Naive thymus-derived CD8-positive, alpha-beta T cell (primary cell): ENCODE measurements at regions of chr5 and their contacts with region 1.

Region 1: GRCh38 chr5:109921735-109922380 is 232.1 kb downstream of the MAN2A1 start:
- DNase-seq: peak; percentile 29 to 90 (median 72)
- ATAC-seq: peak; percentile 89 to 91
- H3K4me3 Mint-ChIP-seq: peak overlapping the region; percentile 71 to 91 (median 84)
- H3K27ac Mint-ChIP-seq: peak overlapping the region; percentile 93 to 100 (median 97)
- H3K4me1 Mint-ChIP-seq: peaks cover 35 to 72% (median 51%) of the 10 kb centered on the region in 4 donors
- H3K27me3 Mint-ChIP-seq: no peaks in the 10 kb centered on the region

Region 2: DNA sequence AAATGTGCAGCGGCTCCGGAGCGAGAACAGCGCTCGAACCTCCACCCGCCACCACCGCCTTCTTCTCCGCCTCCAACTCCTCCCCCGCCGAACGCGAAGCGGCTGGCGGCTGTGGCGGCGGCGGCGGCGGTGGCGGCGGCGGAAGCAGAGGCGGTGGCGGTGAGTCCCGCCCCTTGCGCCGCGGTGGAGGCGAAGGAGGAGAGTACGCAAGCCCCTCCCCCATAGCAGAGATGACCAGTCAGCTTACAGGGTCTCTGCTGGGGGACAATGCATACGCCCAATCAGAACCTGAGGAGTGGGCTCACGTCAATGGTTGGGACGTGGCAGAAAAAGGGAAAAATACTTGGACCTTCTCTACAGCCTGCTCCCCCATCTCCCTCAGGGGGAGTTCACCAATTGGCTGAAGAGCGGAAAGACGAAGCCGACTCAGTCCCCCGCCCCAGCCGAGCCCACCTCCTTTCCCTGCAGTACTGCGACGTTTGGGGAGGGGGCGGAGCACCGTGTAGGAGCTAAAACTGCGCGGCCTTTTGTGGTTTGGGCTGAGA is 511.9 kb before region 1 on chr5 and contains the start of gene PJA2:
- POLR2A ChIA-PET with region 1: interaction called, 16 read pairs
- DNase-seq: peak; percentile 90 to 98 (median 96)
- ATAC-seq: peak; percentile 75 to 77
- H3K4me3 Mint-ChIP-seq: peak within 1 kb of the TSS; percentile 95 to 100 (median 99)
- H3K27ac Mint-ChIP-seq: peak within 1 kb of the TSS; percentile 97 to 100 (median 100)
- H3K4me1 Mint-ChIP-seq: peaks cover 18 to 43% (median 36%) of the 10 kb centered on the region in 4 donors
- H3K27me3 Mint-ChIP-seq: peaks cover 0 to 3% (median 0%) of the 10 kb centered on the region in 5 donors
- polyA plus RNA-seq, gene PJA2: 46.0 to 54.4 (median 47.7) TPM

Region 3: DNA sequence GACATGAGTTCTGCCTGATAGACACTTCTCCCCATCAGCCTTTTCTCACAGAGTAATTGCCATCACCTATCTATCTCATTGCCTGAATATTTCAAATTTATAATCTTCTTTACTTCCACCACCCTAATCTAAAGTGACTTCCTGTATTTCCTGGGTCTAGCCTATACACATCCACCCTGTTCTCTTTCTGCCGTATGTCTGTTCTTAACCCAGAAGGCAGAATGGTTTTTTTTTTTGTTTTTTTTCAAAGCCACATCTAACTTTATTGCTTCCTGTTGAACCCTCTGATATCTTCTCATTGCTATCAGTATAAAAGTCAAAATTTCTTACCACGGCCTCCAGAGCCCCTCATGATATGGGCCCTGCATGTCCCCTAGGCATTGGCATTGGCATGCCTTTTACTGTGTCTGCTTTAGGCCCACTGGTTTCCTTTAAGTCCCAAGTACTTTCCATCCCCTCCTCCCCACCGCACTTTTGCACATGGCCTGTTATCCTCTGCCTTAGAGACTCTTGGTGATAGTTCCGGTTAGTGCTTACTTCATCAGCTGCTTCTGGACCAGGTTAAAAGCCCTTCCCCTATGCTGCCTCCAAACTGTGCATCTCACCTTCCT is 72.3 kb before region 1 on chr5:
- POLR2A ChIA-PET with region 1: interaction called, 11 read pairs
- DNase-seq: peak in 5 of 10 donors; percentile 6 to 63 (median 30)
- ATAC-seq: peak; percentile 82 to 86
- H3K4me3 Mint-ChIP-seq: peak overlapping the region; percentile 39 to 81 (median 58)
- H3K27ac Mint-ChIP-seq: peak overlapping the region; percentile 82 to 95 (median 88)
- H3K4me1 Mint-ChIP-seq: peaks cover 32 to 72% (median 66%) of the 10 kb centered on the region in 4 donors
- H3K27me3 Mint-ChIP-seq: no peaks in the 10 kb centered on the region

Region 4: GRCh38 chr5:109857405-109858031 is 64.3 kb before region 1 on chr5:
- POLR2A ChIA-PET with region 1: interaction called, 32 read pairs
- DNase-seq: peak in 6 of 10 donors; percentile 8 to 75 (median 44)
- ATAC-seq: peak; percentile 74 to 85
- H3K4me3 Mint-ChIP-seq: peak overlapping the region; percentile 37 to 86 (median 70)
- H3K27ac Mint-ChIP-seq: peak overlapping the region; percentile 84 to 96 (median 93)
- H3K4me1 Mint-ChIP-seq: peaks cover 32 to 83% (median 78%) of the 10 kb centered on the region in 4 donors
- H3K27me3 Mint-ChIP-seq: no peaks in the 10 kb centered on the region

Region 5: GRCh38 chr5:109880907-109881685 is 40.8 kb before region 1 on chr5:
- POLR2A ChIA-PET with region 1: no interaction called
- DNase-seq: peak in 3 of 10 donors; percentile 19 to 31 (median 29)
- ATAC-seq: peak; percentile 47 to 57
- H3K4me3 Mint-ChIP-seq: peak overlapping the region in 2 of 10 donors; percentile 3 to 8
- H3K27ac Mint-ChIP-seq: peak overlapping the region in 7 of 10 donors; percentile 17 to 73 (median 34)
- H3K4me1 Mint-ChIP-seq: peaks cover 21 to 37% (median 33%) of the 10 kb centered on the region in 4 donors
- H3K27me3 Mint-ChIP-seq: no peaks in the 10 kb centered on the region

Region 6: GRCh38 chr5:109961751-109962150 is 39.9 kb after region 1 on chr5:
- POLR2A ChIA-PET with region 1: no interaction called
- DNase-seq: no peak
- ATAC-seq: no peak
- H3K4me3 Mint-ChIP-seq: no peak overlapping the region
- H3K27ac Mint-ChIP-seq: no peak overlapping the region
- H3K4me1 Mint-ChIP-seq: peaks cover 20 to 38% (median 22%) of the 10 kb centered on the region in 4 donors
- H3K27me3 Mint-ChIP-seq: no peaks in the 10 kb centered on the region

Region 7: GRCh38 chr5:110040178-110040577 is 118.3 kb after region 1 on chr5:
- POLR2A ChIA-PET with region 1: no interaction called
- DNase-seq: no peak
- ATAC-seq: no peak
- H3K4me3 Mint-ChIP-seq: no peak overlapping the region
- H3K27ac Mint-ChIP-seq: no peak overlapping the region
- H3K4me1 Mint-ChIP-seq: peaks cover 5 to 13% (median 6%) of the 10 kb centered on the region in 4 donors
- H3K27me3 Mint-ChIP-seq: no peaks in the 10 kb centered on the region

Region 8: GRCh38 chr5:110054240-110054639 is 132.4 kb after region 1 on chr5:
- POLR2A ChIA-PET with region 1: interaction called, 16 read pairs
- DNase-seq: peak; percentile 39 to 93 (median 83)
- ATAC-seq: peak; percentile 93 to 96
- H3K4me3 Mint-ChIP-seq: peak overlapping the region; percentile 20 to 82 (median 52)
- H3K27ac Mint-ChIP-seq: peak overlapping the region; percentile 62 to 92 (median 86)
- H3K4me1 Mint-ChIP-seq: peaks cover 11 to 48% (median 43%) of the 10 kb centered on the region in 4 donors
- H3K27me3 Mint-ChIP-seq: no peaks in the 10 kb centered on the region

Region 9: DNA sequence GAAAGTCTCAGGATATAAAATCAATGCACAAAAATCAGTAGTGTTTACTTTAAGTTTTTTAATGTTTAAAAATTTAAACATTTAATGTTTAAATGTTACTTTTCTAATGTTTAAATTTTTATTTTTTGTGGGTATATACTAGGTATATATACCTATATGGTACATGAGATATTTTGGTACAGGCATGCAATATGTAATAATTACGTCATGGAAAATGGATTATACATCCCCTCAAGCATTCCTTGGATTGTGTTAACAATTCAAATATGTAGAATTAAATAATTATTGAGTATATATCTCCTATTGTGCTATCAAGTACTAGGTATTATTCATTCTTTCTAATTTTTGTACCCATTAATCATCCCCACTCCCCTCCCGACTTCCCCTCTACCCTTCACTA is 513.4 kb after region 1 on chr5:
- POLR2A ChIA-PET with region 1: no interaction called
- DNase-seq: no peak
- ATAC-seq: no peak
- H3K4me3 Mint-ChIP-seq: no peak overlapping the region
- H3K27ac Mint-ChIP-seq: no peak overlapping the region
- H3K4me1 Mint-ChIP-seq: no peaks in the 10 kb centered on the region
- H3K27me3 Mint-ChIP-seq: peaks cover 5 to 8% (median 7%) of the 10 kb centered on the region in 5 donors